AG04449 (cell line): ENCODE measurements at regions of chr1 and their contacts with region 1.

Region 1: DNA sequence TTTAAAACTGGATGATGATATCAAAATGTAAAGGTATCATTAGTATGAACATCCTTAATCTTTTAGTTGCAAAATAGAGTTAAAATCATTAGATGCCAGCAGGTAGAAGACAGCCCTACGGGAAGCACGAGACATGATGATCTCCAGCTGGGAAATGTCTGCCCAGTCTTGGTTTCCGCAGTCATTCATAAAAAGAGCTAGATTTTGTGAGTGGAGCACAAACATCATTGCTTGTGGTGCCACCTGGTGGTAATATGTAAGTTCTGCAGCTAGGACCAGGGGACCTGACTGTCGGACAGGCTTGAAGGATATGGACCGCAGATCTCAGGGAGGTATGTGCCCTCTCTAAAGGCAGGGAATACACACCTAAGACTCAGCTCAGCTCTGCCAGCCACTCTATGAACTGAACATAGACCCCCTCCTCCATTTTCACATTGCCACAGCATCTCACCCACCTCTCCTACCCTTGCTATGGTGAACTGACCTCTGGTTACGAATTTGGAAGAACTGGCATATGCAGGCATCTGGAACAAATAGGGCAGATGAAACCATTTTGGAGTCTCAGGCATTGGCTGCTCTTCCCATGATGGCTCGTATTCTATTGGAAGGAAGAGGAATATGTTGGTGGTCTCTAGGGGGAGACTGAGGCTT is 9.2 kb downstream of the FCMR start:
- DNase-seq: no peak
- H3K4me3 ChIP-seq: no peak overlapping the region
- CTCF ChIP-seq: peak; percentile 73

Region 2: GRCh38 chr1:206658264-206658980 is 254.1 kb before region 1 on chr1:
- CTCF ChIA-PET with region 1: interaction called, 23 read pairs
- POLR2A ChIA-PET with region 1: no interaction called
- DNase-seq: no peak
- H3K4me3 ChIP-seq: no peak overlapping the region
- CTCF ChIP-seq: peak; percentile 80

Region 3: GRCh38 chr1:206734499-206735142 is 177.9 kb before region 1 on chr1:
- CTCF ChIA-PET with region 1: interaction called, 490 read pairs
- POLR2A ChIA-PET with region 1: no interaction called
- DNase-seq: no peak
- H3K4me3 ChIP-seq: no peak overlapping the region
- CTCF ChIP-seq: peak; percentile 70

Region 4: DNA sequence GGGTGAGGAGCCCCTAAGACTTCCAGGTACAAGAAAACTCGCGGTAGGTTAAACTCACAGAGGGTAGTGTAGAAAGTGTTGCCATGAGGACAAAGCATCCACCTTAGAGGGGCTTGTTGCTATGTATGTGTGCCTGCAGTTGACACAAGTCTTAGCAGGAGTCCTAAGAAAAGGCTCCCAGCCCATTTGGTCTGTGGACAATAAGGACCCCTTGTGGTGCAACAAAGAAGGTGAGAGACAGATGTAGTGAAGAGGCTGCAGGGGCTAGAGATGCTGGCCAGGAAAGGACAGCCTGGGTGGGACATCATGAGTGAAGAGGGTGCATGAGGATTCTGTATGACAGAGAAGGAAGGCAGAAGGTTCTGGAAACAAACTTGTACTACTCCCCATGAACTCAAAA is 104.0 kb before region 1 on chr1:
- CTCF ChIA-PET with region 1: interaction called, 272 read pairs
- POLR2A ChIA-PET with region 1: no interaction called
- DNase-seq: no peak
- H3K4me3 ChIP-seq: no peak overlapping the region
- CTCF ChIP-seq: peak; percentile 49

Region 5: GRCh38 chr1:206885341-206886060 is 27.1 kb before region 1 on chr1:
- CTCF ChIA-PET with region 1: interaction called, 13 read pairs
- POLR2A ChIA-PET with region 1: no interaction called
- DNase-seq: no peak
- H3K4me3 ChIP-seq: no peak overlapping the region
- CTCF ChIP-seq: no peak

Region 6: DNA sequence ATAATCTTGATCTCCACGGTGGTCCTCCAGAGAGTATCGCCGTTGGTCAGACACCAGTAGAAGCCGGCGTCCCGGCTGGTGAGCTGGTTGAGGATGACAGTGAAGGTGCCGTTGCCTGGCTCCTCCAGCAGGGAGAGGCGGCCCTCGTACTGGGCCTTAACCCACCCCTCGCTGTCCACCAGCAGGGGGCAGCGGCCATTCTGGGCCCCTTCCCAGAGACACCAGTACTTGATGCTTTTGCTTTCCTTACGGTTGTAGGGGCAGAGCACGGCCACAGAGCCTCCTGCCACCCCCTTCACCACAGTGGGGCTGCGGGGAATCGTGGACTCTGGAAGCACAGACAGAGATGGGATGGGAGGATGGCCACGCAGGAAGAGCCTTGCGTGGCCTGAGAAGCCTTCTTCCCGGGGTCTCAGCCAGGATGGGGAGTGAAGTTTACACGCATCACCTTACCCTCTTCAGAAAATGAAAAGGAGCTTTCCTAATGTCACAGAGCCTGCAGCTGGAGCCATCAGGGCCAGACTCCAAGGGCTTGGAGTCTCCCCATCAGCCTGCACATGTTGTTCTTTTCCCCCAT is 23.0 kb after region 1 on chr1:
- CTCF ChIA-PET with region 1: interaction called, 32 read pairs
- POLR2A ChIA-PET with region 1: no interaction called
- DNase-seq: no peak
- H3K4me3 ChIP-seq: no peak overlapping the region
- CTCF ChIP-seq: peak; percentile 64

Region 7: GRCh38 chr1:207025144-207025880 is 112.7 kb after region 1 on chr1:
- CTCF ChIA-PET with region 1: no interaction called
- POLR2A ChIA-PET with region 1: no interaction called
- DNase-seq: no peak
- H3K4me3 ChIP-seq: no peak overlapping the region
- CTCF ChIP-seq: no peak

Region 8: GRCh38 chr1:207156095-207156494 is 243.5 kb after region 1 on chr1:
- CTCF ChIA-PET with region 1: no interaction called
- POLR2A ChIA-PET with region 1: no interaction called
- DNase-seq: no peak
- H3K4me3 ChIP-seq: no peak overlapping the region
- CTCF ChIP-seq: no peak

Region 9: DNA sequence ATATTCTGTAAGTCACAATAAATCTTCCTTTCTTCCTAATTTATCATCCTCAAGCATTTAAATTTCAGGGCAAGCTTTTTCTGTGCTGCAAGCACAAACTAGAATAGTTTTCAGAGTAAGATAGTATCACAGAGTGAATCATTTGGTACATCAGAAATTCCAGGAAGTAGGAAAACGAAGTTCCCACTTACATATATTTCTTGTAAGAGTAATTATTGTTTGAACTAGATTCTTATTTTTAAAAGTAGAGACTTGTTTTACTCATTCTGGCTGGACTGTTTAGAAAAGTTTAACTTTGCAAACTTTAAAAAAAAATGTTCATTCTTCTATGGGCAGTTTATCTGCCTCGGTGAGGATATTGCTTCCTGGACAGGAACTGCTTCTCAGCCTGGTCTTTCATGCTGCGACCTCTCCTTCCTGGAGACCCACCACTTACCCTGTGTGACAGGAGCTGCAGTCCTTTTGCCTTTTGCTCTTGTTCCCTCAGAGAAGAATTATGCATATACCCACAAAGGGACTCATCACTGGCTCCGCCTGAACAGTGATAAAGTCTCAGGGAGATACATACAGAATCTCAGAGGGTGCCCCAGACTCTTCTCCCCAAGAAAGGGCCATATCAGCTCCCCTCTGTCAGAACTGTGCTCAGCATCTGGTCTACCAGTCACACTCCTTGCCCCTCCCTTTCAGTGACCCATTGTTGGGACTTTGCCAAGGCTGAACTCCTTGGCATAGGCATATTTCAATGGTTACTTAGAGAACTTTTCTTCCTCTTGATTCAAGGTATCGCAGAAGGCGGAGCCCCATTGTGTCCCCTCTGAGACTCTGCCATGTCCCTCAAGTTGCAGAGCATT is 306.2 kb after region 1 on chr1:
- CTCF ChIA-PET with region 1: no interaction called
- POLR2A ChIA-PET with region 1: no interaction called
- DNase-seq: no peak
- H3K4me3 ChIP-seq: no peak overlapping the region
- CTCF ChIP-seq: no peak